ENCODE measurements at regions of chr3 and their contacts with region 1.

Region 1: GRCh38 chr3:195850857-195851543 is 39.3 kb upstream of the MUC4 start:
- DNase-seq: peak; percentile 94
- CTCF ChIP-seq: peak; percentile 100

Region 2: GRCh38 chr3:195558602-195559001 is 292.4 kb before region 1 on chr3:
- in situ Hi-C with region 1: loop called (anchors 25 kb)
- DNase-seq: peak; percentile 31
- CTCF ChIP-seq: peak; percentile 67

Region 3: DNA sequence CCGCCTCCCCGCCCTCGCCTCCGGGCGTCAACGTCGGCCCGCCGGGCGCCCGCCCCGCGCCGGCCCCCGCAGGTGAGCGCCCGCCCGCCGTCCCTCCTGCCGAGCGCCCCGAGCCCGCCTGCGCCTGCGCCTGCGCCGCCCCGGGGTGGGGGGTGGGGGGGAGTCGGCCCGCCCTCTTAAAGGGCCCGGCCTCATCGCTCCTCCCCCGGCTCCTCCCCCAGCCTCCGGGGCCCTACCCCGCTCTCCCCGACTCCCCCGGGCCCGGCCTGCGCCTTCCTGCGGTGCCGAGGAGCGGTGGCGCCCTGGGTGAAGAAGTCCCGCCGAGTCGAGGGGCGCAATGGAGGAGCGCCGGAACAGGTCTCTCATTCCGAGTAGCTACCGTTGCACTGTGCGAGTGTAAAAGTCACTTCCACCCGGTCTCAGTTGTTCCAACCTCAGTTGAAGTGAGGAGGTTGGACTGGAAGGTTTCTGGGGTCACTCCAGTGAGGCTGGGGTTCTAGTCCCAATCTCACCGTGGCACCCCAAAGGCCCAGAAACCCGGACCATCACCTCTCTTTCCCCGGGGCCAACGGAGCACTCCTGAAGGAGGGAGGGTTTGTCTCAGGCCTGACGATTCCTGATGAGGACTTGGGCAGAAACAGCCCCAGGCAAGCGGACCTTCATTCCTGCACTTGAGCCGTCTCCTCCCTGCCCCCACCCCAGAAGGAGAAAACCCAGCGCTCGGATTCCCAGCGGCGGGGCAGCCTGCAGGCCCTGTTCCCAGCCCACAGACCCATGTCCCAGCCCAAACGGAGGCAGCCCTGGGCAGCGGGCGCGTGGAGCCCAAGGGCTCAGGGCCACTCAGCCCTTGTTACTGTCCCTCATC is 58.9 kb after region 1 on chr3:
- in situ Hi-C with region 1: loop called (anchors 10 kb)
- DNase-seq: peak; percentile 98
- CTCF ChIP-seq: no peak